MCF 10A (cell line): ENCODE measurements at regions of chr4 and their contacts with region 1.

Region 1: DNA sequence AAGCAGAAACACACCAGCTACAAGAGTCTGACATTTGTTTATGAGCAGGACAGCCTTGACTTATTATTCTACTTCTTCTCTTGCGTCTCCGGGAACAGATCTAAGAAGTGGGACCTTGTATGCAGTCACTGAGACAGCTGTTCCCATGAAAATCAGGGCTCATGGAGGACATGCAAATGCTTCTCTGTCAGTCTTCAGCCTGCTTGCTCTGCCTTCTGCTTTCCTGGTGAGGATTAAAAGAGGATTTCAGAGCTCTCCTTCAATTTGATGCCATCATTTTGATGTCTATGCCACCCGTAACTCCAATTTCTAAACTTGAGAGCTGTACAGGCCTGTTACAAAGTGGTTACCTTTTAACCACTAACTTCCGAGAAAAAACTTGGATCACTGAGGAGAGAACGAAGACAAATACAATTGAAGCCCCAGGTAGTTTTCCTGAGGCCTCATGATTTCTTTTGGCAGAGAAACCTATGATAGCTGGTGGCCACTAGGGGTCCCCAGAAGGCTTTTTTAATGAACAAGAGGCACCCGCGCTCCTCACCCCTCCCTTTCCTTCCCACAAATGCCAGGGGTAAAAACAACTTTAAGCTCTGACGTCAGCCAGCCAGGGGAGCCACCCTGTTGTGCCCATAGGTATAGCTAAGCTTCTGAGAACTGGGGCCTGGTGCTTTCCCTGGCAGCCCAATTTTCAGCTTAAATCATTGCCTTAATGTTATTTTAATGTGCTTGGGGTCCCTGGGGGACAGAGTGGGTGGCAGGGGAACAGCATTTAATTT is 97.0 kb downstream of the DDIT4L start:
- DNase-seq: peak; percentile 94
- H3K4me3 Mint-ChIP-seq: no peak overlapping the region
- H3K27ac Mint-ChIP-seq: peak overlapping the region; percentile 87
- H3K4me1 Mint-ChIP-seq: peaks cover 19% of the 10 kb centered on the region
- H3K27me3 Mint-ChIP-seq: no peaks in the 10 kb centered on the region
- CTCF ChIP-seq: peak; percentile 66

Region 2: GRCh38 chr4:100082852-100083251 is 10.4 kb before region 1 on chr4:
- CTCF ChIA-PET with region 1: interaction called, 43 read pairs
- POLR2A ChIA-PET with region 1: interaction called, 5 read pairs
- intact Hi-C with region 1: no loop called
- DNase-seq: no peak
- H3K4me3 Mint-ChIP-seq: no peak overlapping the region
- H3K27ac Mint-ChIP-seq: no peak overlapping the region
- H3K4me1 Mint-ChIP-seq: peaks cover 20% of the 10 kb centered on the region
- H3K27me3 Mint-ChIP-seq: no peaks in the 10 kb centered on the region
- CTCF ChIP-seq: no peak

Region 3: GRCh38 chr4:100421361-100421978 is 328.2 kb after region 1 on chr4:
- CTCF ChIA-PET with region 1: interaction called, 5 read pairs
- POLR2A ChIA-PET with region 1: no interaction called
- intact Hi-C with region 1: loop called (anchors 1 kb)
- DNase-seq: peak; percentile 58
- H3K4me3 Mint-ChIP-seq: no peak overlapping the region
- H3K27ac Mint-ChIP-seq: peak overlapping the region; percentile 80
- H3K4me1 Mint-ChIP-seq: peaks cover 12% of the 10 kb centered on the region
- H3K27me3 Mint-ChIP-seq: no peaks in the 10 kb centered on the region
- CTCF ChIP-seq: peak; percentile 69

Region 4: DNA sequence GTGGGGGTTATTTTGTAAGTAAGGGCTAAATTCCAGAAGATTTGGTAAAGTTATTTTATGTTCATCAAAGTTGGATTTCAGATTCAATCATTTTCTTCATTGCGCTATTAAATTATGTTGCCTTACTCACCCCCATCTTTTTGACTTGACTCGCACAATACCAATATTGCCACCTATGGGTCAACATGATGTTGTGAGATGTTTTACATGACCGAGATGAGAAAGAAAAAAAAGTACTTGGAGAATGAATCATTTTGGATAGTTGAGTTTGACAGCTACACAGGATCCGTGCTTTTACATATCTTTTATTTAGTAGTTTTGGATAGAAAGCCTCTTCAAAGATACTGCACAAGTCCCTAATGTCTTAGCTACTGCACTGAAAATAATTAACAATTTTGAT is 648.8 kb after region 1 on chr4:
- CTCF ChIA-PET with region 1: interaction called, 9 read pairs
- POLR2A ChIA-PET with region 1: interaction called, 3 read pairs
- intact Hi-C with region 1: loop called (anchors 1 kb)
- DNase-seq: peak; percentile 77
- H3K4me3 Mint-ChIP-seq: no peak overlapping the region
- H3K27ac Mint-ChIP-seq: no peak overlapping the region
- H3K4me1 Mint-ChIP-seq: peaks cover 22% of the 10 kb centered on the region
- H3K27me3 Mint-ChIP-seq: no peaks in the 10 kb centered on the region
- CTCF ChIP-seq: peak; percentile 53